Gastrocnemius medialis (tissue), 4 donors: ENCODE measurements at regions of chr17 and their contacts with region 1.

Region 1: DNA sequence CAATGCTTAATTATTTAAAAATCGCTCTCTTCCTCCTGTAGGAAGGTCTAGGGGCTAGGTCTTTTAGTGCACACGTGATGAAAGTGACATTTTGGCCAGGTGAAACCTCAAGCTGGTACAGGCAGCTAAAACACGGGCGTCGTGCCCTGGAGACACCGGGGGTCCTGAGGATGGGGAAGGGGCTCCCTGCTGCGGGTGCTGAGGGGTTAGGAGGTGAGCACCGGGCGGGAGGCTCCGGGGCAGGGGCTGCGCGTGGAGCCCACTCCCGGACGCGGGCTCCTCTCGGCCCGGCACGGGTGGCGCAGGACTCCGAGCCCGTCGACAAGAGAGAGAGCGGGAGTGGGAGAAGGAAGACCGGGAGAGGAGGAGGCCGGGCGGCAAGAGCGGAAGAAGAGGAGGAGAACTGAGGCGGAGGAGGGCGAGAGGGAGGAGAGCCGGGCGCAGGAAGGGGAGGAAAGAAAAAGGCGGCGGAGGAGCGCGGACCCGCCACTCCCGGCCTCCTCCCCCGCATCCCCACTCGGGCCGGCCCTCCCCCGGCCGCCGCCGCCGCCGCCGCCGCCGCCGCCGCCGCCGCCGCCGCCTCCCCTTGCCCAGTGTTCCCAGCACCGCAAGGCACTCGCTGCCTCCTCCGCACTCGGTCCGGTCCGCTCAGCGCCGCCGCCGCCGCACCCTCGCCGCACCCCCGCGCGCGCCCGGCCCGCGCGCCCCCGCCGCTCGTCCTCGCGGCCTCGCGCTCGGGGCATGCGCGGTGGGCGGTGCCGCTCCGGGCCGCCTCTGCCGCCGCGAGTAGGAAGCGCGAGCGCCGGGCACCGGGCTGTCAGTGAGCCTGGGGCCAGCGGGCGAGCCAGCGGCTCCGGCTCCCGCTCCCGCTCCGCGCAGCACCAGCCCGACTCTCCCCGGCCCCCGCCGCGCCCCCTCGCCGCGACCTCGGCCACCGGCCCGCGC is at the start of gene PRKCA:
- DNase-seq: peak; percentile 56 to 64
- ATAC-seq: peak; percentile 80 to 86
- H3K4me3 ChIP-seq: peak within 1 kb of the TSS; percentile 72 to 97 (median 86)
- H3K27ac ChIP-seq: peak within 1 kb of the TSS; percentile 87 to 92 (median 88)
- H3K4me1 ChIP-seq: peaks cover 11 to 12% of the 10 kb centered on the region in 2 donors
- H3K27me3 ChIP-seq: no peaks in the 10 kb centered on the region
- CTCF ChIP-seq: no peak
- POLR2A ChIP-seq: peak; percentile 85 to 86
- total RNA-seq, gene PRKCA: 7.6 to 16.8 (median 11.1) TPM

Region 2: DNA sequence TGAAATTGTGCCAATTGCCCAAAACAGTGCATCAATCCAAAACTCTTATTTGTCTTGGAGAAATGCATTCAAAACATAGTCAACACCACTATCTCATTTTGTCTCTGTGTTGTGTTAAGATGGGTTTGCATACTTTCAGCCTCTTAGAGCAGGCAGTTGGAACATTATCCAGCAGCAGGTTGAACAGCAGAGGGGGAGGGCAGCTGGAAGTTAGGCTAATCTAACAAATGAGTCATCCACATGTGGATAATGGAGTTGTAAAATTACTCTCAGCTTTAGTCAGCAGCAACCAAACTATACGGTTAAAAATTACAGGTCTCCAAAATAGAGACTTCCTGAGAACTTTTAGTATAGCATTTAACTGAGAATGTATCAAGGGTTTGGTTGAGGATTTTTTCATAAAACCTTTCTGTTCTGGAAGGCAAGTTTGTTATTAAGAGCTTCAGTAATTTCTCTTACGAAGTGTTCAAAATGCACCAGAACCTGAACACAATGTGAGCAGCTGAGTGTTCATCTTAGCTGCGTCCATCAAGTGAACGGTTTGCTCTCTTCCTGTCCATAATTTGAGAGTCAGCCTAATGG is 46.6 kb after region 1 on chr17:
- in situ Hi-C with region 1: no loop called
- intact Hi-C with region 1: loop called (anchors 1 kb)
- DNase-seq: peak; percentile 18 to 24
- ATAC-seq: peak; percentile 82 to 88
- H3K4me3 ChIP-seq: no peak overlapping the region
- H3K27ac ChIP-seq: peak overlapping the region; percentile 75 to 80 (median 78)
- H3K4me1 ChIP-seq: peaks cover 21 to 23% of the 10 kb centered on the region in 2 donors
- H3K27me3 ChIP-seq: no peaks in the 10 kb centered on the region
- CTCF ChIP-seq: no peak
- POLR2A ChIP-seq: no peak

Region 3: GRCh38 chr17:66364990-66365490 is 63.0 kb after region 1 on chr17:
- in situ Hi-C with region 1: loop called in 1 of 4 experiments (anchors 10 kb)
- intact Hi-C with region 1: no loop called
- DNase-seq: no peak
- ATAC-seq: no peak
- H3K4me3 ChIP-seq: no peak overlapping the region
- H3K27ac ChIP-seq: no peak overlapping the region
- H3K4me1 ChIP-seq: no peaks in the 10 kb centered on the region
- H3K27me3 ChIP-seq: no peaks in the 10 kb centered on the region
- CTCF ChIP-seq: no peak
- POLR2A ChIP-seq: no peak

Region 4: DNA sequence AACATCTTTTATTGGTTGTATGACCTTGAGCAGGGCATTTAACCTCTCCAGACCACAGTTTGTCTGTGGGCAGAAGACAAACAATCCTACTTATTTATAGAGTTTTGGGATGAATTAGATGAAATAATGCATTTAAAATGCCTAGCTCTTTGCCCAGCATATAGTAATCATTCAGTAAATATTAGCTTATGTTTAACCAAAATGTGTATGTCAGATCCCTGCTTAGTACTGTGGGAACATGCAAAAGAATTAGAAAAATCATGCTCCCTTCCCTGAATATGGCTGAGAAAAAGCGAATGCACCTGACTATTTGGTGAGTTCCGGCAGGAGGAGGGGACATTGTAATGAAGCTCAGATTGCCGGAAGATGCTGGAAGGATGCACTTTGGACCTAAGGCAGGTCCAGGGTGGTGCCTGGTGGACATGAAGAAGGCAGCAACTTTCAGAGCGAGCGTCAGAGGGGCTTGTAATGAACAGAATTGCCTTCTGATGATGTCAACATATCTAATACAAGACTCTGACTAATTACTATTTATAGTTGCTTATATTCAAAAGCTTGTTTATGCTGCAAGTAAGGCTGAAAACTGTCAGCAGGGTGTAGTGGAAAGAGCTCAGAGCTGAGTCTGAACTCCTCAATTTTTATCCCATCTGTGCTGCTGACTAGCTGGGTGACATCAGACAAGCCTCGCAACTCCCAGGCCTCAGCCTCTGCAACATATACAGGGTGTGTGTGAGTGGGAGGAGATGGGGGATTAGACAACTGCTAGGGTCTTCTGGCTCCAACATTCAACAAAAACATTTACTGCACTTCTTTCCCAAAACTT is 221.5 kb after region 1 on chr17:
- in situ Hi-C with region 1: no loop called
- intact Hi-C with region 1: loop called (anchors 5 kb)
- DNase-seq: no peak
- ATAC-seq: peak; percentile 69 to 75
- H3K4me3 ChIP-seq: no peak overlapping the region
- H3K27ac ChIP-seq: peak overlapping the region in 3 of 4 donors; percentile 18 to 77 (median 64)
- H3K4me1 ChIP-seq: peaks cover 15 to 17% of the 10 kb centered on the region in 2 donors
- H3K27me3 ChIP-seq: no peaks in the 10 kb centered on the region
- CTCF ChIP-seq: no peak
- POLR2A ChIP-seq: peak in 1 of 2 donors; percentile 57

Region 5: GRCh38 chr17:66567234-66568170 is 265.4 kb after region 1 on chr17:
- in situ Hi-C with region 1: no loop called
- intact Hi-C with region 1: loop called (anchors 2 kb)
- DNase-seq: peak; percentile 32 to 62
- ATAC-seq: peak; percentile 81 to 85
- H3K4me3 ChIP-seq: no peak overlapping the region
- H3K27ac ChIP-seq: no peak overlapping the region
- H3K4me1 ChIP-seq: no peaks in the 10 kb centered on the region
- H3K27me3 ChIP-seq: no peaks in the 10 kb centered on the region
- CTCF ChIP-seq: peak; percentile 43 to 82 (median 78)
- POLR2A ChIP-seq: no peak

Region 6: DNA sequence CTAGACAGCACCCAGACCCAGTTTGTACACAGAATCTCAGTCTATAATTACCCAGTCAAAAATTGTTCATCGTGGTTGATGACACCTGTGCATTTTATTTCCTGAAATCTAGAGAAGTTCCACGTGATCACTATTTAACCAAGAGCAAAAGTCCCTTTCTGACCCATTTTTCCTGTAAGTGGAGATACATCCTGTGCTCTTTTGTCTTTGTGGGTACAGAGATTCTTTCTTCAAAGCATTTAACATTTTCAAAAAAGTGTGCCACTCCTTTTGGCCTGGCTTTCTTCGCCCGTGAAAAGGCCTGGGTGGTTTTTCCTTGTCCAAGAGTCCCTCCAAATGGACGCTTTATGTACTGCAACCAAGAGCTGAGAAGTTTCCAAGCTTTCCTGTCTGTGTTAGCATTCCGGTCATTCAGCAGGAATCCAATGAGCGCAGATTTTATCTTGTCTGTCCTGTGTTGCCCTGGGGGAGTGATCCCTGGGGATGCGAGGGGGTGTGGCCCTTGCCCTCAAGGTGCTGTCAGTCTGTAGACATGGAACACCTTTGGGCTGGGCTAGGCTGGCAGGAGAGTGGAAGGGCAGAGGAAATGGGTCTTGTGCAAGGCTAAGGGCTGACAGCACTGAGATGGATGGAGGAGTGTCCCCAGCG is 371.7 kb after region 1 on chr17:
- in situ Hi-C with region 1: no loop called
- intact Hi-C with region 1: loop called (anchors 1 kb)
- DNase-seq: peak; percentile 16 to 24
- ATAC-seq: peak; percentile 25 to 47
- H3K4me3 ChIP-seq: no peak overlapping the region
- H3K27ac ChIP-seq: peak overlapping the region in 3 of 4 donors; percentile 9 to 22 (median 14)
- H3K4me1 ChIP-seq: peaks cover 13 to 25% of the 10 kb centered on the region in 2 donors
- H3K27me3 ChIP-seq: no peaks in the 10 kb centered on the region
- CTCF ChIP-seq: peak; percentile 64 to 75 (median 73)
- POLR2A ChIP-seq: no peak

Region 7: GRCh38 chr17:67993596-67994361 is 1691.7 kb after region 1 on chr17:
- in situ Hi-C with region 1: no loop called
- intact Hi-C with region 1: loop called (anchors 5 kb)
- DNase-seq: peak; percentile 66 to 80
- ATAC-seq: peak; percentile 79 to 82
- H3K4me3 ChIP-seq: peak overlapping the region; percentile 70 to 86 (median 83)
- H3K27ac ChIP-seq: peak overlapping the region; percentile 94 to 96 (median 94)
- H3K4me1 ChIP-seq: peaks cover 11 to 18% of the 10 kb centered on the region in 2 donors
- H3K27me3 ChIP-seq: no peaks in the 10 kb centered on the region
- CTCF ChIP-seq: no peak
- POLR2A ChIP-seq: peak; percentile 67 to 75